Activated T-helper 2 cell treated with anti-CD3 and anti-CD28 coated beads, Interferon-gamma antibody, Interleukin-2, Interleukin-4, amounts not matched to agents 10 μg/mL and 5 μg/mL and 100 μg/mL, durations not matched to agents 14 hours and 24 hours and 36 hours (primary cell): ENCODE measurements at regions of chr3 and their contacts with region 1.

Region 1: GRCh38 chr3:116770815-116771450 is 61.4 kb downstream of the TUSC7 start:
- DNase-seq: peak; percentile 17
- H3K4me3 Mint-ChIP-seq: no peak overlapping the region
- H3K27ac Mint-ChIP-seq: no peak overlapping the region
- H3K4me1 Mint-ChIP-seq: no peaks in the 10 kb centered on the region
- H3K27me3 Mint-ChIP-seq: no peaks in the 10 kb centered on the region

Region 2: GRCh38 chr3:117526470-117527079 is 755.6 kb after region 1 on chr3:
- intact Hi-C with region 1: loop called (anchors 5 kb)
- DNase-seq: no peak
- H3K4me3 Mint-ChIP-seq: no peak overlapping the region
- H3K27ac Mint-ChIP-seq: no peak overlapping the region
- H3K4me1 Mint-ChIP-seq: no peaks in the 10 kb centered on the region
- H3K27me3 Mint-ChIP-seq: no peaks in the 10 kb centered on the region

Region 3: GRCh38 chr3:117719316-117719926 is 948.5 kb after region 1 on chr3:
- intact Hi-C with region 1: loop called (anchors 2 kb)
- DNase-seq: no peak
- H3K4me3 Mint-ChIP-seq: no peak overlapping the region
- H3K27ac Mint-ChIP-seq: no peak overlapping the region
- H3K4me1 Mint-ChIP-seq: no peaks in the 10 kb centered on the region
- H3K27me3 Mint-ChIP-seq: no peaks in the 10 kb centered on the region

Region 4: GRCh38 chr3:117997201-117998049 is 1226.5 kb after region 1 on chr3:
- intact Hi-C with region 1: loop called (anchors 5 kb)
- DNase-seq: peak; percentile 36
- H3K4me3 Mint-ChIP-seq: no peak overlapping the region
- H3K27ac Mint-ChIP-seq: no peak overlapping the region
- H3K4me1 Mint-ChIP-seq: no peaks in the 10 kb centered on the region
- H3K27me3 Mint-ChIP-seq: no peaks in the 10 kb centered on the region